IMR-90 (cell line): ENCODE measurements at regions of chr3 and their contacts with region 1.

Region 1: DNA sequence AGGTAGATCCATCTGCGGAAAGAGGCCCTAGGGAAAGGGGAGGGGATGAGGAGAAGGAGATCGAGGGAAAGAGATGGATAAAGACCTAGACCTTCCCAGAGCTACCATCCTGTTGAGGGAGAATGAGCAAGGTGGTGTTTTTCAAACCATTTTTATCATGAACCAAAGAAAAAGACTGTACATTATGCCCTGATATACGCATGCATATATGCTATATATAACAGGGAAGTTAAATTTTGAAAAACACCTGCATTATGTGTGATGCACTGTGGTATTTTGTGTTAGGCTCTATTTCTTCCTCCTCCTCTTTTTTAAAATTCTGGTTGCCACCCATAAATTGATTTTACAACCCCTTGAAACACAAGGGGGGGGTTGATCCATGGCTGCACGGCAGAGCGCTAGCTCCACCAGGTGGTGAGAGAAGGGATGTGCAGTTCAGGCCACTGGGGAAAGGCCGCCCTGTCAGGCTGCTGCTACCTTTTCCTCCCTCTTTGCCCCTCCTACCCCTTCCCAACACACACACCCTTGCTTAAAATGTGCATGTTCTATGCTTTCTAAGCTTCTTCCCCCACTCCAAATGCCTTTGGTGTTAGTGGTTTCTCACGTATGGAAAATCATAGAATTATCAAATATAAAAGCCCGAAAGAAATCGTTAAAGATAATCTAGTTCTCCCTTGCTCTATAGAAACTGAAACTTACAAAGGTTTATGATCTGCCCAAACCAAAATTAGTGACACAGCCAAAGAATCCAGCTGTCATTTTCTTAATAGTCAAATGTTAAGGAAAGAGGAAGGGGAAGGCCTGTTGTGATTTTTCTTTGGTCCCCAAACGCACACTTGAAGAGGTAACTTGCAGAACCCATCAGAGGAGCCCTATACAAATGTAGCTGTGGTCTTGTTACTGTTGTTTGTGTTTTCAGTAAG is 262.0 kb upstream of the UMPS start:
- DNase-seq: peak; percentile 40
- ATAC-seq: peak; percentile 97
- H3K4me3 ChIP-seq: no peak overlapping the region
- H3K27ac ChIP-seq: no peak overlapping the region
- H3K4me1 ChIP-seq: no peaks in the 10 kb centered on the region
- H3K27me3 ChIP-seq: peaks cover 10% of the 10 kb centered on the region
- CTCF ChIP-seq: peak; percentile 97
- POLR2A ChIP-seq: peak; percentile 47; the same call in 1 of the 2 replicates
- RAD21 ChIP-seq: peak; percentile 99

Region 2: GRCh38 chr3:124014366-124014942 is 453.8 kb before region 1 on chr3:
- CTCF ChIA-PET with region 1: interaction called, 3 read pairs
- POLR2A ChIA-PET with region 1: no interaction called
- dilution Hi-C with region 1: no loop called
- in situ Hi-C with region 1: loop called (anchors 5 kb)
- intact Hi-C with region 1: loop called (anchors 2 kb)
- DNase-seq: peak; percentile 17
- ATAC-seq: no peak
- H3K4me3 ChIP-seq: no peak overlapping the region
- H3K27ac ChIP-seq: no peak overlapping the region
- H3K4me1 ChIP-seq: no peaks in the 10 kb centered on the region
- H3K27me3 ChIP-seq: peaks cover 25% of the 10 kb centered on the region
- CTCF ChIP-seq: no peak
- POLR2A ChIP-seq: no peak
- RAD21 ChIP-seq: no peak

Region 3: GRCh38 chr3:124351430-124352148 is 116.7 kb before region 1 on chr3:
- CTCF ChIA-PET with region 1: interaction called, 27 read pairs
- POLR2A ChIA-PET with region 1: no interaction called
- dilution Hi-C with region 1: no loop called
- in situ Hi-C with region 1: loop called (anchors 5 kb)
- intact Hi-C with region 1: loop called (anchors 1 kb)
- DNase-seq: peak; percentile 78
- ATAC-seq: peak; percentile 96
- H3K4me3 ChIP-seq: no peak overlapping the region
- H3K27ac ChIP-seq: no peak overlapping the region
- H3K4me1 ChIP-seq: no peaks in the 10 kb centered on the region
- H3K27me3 ChIP-seq: peaks cover 7% of the 10 kb centered on the region; the same call in 1 of the 2 replicates
- CTCF ChIP-seq: peak; percentile 75
- POLR2A ChIP-seq: no peak
- RAD21 ChIP-seq: peak; percentile 90

Region 4: GRCh38 chr3:124373524-124373923 is 94.7 kb before region 1 on chr3:
- CTCF ChIA-PET with region 1: no interaction called
- POLR2A ChIA-PET with region 1: no interaction called
- dilution Hi-C with region 1: no loop called
- in situ Hi-C with region 1: no loop called
- intact Hi-C with region 1: no loop called
- DNase-seq: no peak
- ATAC-seq: no peak
- H3K4me3 ChIP-seq: no peak overlapping the region
- H3K27ac ChIP-seq: no peak overlapping the region
- H3K4me1 ChIP-seq: no peaks in the 10 kb centered on the region
- H3K27me3 ChIP-seq: peaks cover 2% of the 10 kb centered on the region
- CTCF ChIP-seq: no peak
- POLR2A ChIP-seq: no peak
- RAD21 ChIP-seq: no peak

Region 5: DNA sequence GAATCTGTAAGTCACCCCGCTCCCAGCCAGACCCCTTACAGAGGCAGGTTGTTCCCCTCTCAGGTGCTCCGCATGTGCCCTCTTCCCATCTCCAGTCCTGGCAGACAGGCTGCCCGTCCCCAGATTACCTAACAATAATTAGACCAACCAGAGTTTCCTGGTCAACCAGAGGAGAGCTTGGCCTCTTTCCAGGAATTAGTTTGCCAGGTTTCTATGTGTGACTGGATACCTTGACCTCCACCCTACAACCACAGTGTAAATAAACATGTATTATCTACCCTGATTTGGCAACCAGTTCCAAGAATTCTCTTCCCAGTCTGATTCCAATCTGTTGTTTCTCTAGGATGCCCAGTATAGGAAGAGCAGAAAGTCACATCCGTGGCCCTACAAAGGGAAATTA is 84.0 kb after region 1 on chr3:
- CTCF ChIA-PET with region 1: no interaction called
- POLR2A ChIA-PET with region 1: no interaction called
- dilution Hi-C with region 1: no loop called
- in situ Hi-C with region 1: no loop called
- intact Hi-C with region 1: loop called (anchors 5 kb)
- DNase-seq: peak; percentile 4
- ATAC-seq: no peak
- H3K4me3 ChIP-seq: no peak overlapping the region
- H3K27ac ChIP-seq: no peak overlapping the region
- H3K4me1 ChIP-seq: no peaks in the 10 kb centered on the region
- H3K27me3 ChIP-seq: peaks cover 15% of the 10 kb centered on the region
- CTCF ChIP-seq: no peak
- POLR2A ChIP-seq: no peak
- RAD21 ChIP-seq: no peak